Activated T-helper 1 cell treated with anti-CD3 and anti-CD28 coated beads, Interleukin-12 subunit alpha, Interleukin-12 subunit beta, Interleukin-2, Interleukin-4 antibody, amounts not matched to agents 30 ng/mL and 10 ng/mL and 1 ng/mL, durations not matched to agents 14 hours and 24 hours and 36 hours (primary cell): ENCODE measurements at regions of chr13 and their contacts with region 1.

Region 1: DNA sequence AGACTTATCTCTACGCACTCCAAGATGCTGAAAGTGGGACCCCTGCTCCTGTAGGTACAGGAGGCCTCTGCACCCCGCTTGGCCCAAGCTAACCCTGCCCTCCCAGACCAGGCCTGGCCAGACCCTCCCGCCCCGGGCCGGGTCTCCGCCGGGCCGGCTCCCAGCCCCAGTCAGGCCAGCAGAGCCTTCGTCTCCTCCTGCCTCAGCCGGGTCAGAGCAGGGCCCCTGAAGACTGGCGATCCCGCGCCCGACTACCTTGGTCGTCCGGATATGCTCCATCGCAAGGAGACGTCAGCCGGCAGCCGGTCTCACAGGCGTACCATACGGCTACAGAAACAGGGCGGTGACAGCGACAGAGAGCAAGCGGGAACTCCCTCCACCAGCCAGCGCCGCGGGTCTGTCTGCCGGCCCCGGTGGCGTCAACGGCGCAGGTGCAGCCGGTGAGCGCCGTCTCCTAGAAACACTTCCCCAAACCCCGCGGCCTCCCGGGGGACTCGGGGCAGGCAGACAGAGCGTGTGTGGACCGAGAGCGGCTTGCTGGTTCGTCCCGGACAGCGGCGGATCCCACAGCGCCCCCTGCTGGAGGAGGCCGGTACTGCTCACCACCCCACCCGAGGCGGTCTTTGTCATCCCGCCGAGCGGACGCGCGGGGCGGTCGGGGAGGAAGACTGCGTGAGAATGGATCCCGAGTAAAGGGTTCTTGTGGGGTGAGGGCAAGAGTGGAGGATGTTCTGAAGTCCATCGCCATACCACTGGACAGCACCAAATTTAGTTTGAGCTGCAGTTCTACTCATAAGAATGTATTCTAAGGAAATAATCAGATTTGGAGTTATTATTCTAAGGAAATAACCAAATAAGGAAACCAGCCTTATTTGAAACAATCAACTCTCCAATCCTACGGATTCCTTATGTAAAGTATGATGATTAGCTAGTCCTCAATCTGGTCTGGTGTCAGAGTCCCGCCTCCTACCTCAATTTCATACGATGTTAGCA is at the start of gene MTMR6:
- DNase-seq: peak; percentile 90
- H3K4me3 Mint-ChIP-seq: peak within 1 kb of the TSS; percentile 94
- H3K27ac Mint-ChIP-seq: peak within 1 kb of the TSS; percentile 93
- H3K4me1 Mint-ChIP-seq: peaks cover 41% of the 10 kb centered on the region
- H3K27me3 Mint-ChIP-seq: peaks cover 21% of the 10 kb centered on the region
- total RNA-seq, gene MTMR6: 17.0 and 17.9 TPM in 2 replicates

Region 2: GRCh38 chr13:25232937-25233515 is 54.2 kb before region 1 on chr13:
- intact Hi-C with region 1: loop called (anchors 5 kb)
- DNase-seq: no peak
- H3K4me3 Mint-ChIP-seq: no peak overlapping the region
- H3K27ac Mint-ChIP-seq: no peak overlapping the region
- H3K4me1 Mint-ChIP-seq: no peaks in the 10 kb centered on the region
- H3K27me3 Mint-ChIP-seq: no peaks in the 10 kb centered on the region

Region 3: GRCh38 chr13:25276748-25277147 is 10.5 kb before region 1 on chr13:
- intact Hi-C with region 1: loop called (anchors 1 kb)
- DNase-seq: no peak
- H3K4me3 Mint-ChIP-seq: no peak overlapping the region
- H3K27ac Mint-ChIP-seq: no peak overlapping the region
- H3K4me1 Mint-ChIP-seq: peaks cover 46% of the 10 kb centered on the region
- H3K27me3 Mint-ChIP-seq: no peaks in the 10 kb centered on the region

Region 4: DNA sequence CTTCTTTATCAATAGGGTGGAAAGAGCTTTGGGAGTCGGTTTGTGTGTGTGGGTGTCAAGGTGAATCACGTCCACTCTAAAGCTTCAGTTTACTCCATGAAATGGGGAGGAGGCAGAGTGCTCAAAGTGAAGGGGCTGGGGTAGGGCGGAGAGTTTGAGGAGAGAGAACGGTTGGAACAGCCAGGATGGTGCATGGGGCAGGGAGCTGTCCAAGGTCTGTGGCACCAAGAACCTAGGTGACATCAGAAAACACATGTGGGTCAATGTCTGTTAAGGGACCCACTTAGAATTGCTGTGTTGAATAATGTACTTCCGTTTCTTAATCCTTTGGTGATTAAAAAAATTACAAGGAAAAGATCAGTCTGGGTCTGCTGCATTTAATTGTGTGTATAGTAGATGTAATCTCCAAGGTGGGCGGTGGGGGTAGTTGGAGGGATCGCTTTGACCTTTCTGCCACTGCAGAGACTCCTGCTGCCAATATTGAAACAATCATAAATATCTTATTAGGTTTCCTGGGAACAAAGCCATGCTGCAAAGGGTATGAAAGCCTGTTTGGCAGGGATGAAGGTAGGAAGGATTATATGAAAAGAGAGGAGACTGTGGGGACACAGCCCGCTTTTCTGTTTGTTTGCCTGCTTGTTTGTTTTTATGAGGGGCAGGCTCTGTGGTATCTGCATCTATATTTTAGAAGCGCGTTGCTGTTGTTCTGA is 206.8 kb after region 1 on chr13:
- intact Hi-C with region 1: no loop called
- DNase-seq: no peak
- H3K4me3 Mint-ChIP-seq: no peak overlapping the region
- H3K27ac Mint-ChIP-seq: no peak overlapping the region
- H3K4me1 Mint-ChIP-seq: no peaks in the 10 kb centered on the region
- H3K27me3 Mint-ChIP-seq: peaks cover 9% of the 10 kb centered on the region

Region 5: DNA sequence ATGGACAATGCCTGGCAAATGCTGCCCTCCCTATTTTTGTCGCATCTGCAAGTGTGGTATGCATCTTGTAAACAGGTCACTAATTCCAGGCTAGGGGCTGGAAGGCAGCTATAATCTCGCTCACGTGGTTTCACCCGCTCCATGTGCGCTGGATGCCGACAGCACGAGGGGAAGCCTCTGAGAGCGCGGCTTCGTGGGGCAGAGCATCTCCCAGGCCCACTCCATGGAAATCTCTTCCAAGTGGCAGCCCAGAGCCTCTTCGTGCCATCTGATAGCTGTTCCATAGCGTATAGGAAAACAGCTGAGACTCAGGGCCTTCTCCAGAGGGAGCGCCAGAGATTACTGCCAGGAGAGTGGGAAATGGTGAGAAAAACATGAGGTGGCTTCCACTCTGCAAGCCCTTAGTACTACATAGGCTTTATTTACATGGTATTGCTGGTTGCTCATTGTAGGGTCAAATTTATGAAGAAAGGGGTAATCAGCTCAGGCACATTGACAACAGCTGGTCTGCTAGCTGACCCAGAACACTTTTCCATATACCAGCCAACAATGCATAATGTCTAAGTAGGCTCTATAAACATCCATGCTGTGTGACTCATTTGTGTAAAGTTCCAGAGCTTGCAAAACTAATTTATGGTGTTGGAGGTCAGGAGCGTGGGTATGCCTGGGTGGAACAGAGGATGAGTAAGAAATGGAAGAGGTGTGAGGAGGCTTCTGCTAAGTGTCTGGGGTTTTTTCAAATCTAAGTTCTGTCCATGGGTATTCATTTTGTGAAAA is 599.4 kb after region 1 on chr13:
- intact Hi-C with region 1: loop called (anchors 10 kb)
- DNase-seq: peak; percentile 14
- H3K4me3 Mint-ChIP-seq: no peak overlapping the region
- H3K27ac Mint-ChIP-seq: peak overlapping the region; percentile 75
- H3K4me1 Mint-ChIP-seq: peaks cover 71% of the 10 kb centered on the region
- H3K27me3 Mint-ChIP-seq: peaks cover 5% of the 10 kb centered on the region

Region 6: GRCh38 chr13:26253787-26254582 is 966.7 kb after region 1 on chr13 and contains the start of gene CDK8:
- intact Hi-C with region 1: loop called (anchors 10 kb)
- DNase-seq: peak; percentile 80
- H3K4me3 Mint-ChIP-seq: peak within 1 kb of the TSS; percentile 91
- H3K27ac Mint-ChIP-seq: peak within 1 kb of the TSS; percentile 88
- H3K4me1 Mint-ChIP-seq: peaks cover 25% of the 10 kb centered on the region
- H3K27me3 Mint-ChIP-seq: peaks cover 2% of the 10 kb centered on the region
- total RNA-seq, gene CDK8: 18.4 and 18.9 TPM in 2 replicates